Panc1 (cell line): ENCODE measurements at regions of chr9 and their contacts with region 1.

Region 1: GRCh38 chr9:114653556-114654159 is 3.9 kb downstream of the TEX53 start:
- DNase-seq: peak; percentile 54
- ATAC-seq: peak; percentile 76
- H3K4me3 ChIP-seq: no peak overlapping the region
- H3K27ac ChIP-seq: no peak overlapping the region
- H3K4me1 ChIP-seq: no peaks in the 10 kb centered on the region
- H3K27me3 ChIP-seq: no peaks in the 10 kb centered on the region
- CTCF ChIP-seq: peak; percentile 88

Region 2: DNA sequence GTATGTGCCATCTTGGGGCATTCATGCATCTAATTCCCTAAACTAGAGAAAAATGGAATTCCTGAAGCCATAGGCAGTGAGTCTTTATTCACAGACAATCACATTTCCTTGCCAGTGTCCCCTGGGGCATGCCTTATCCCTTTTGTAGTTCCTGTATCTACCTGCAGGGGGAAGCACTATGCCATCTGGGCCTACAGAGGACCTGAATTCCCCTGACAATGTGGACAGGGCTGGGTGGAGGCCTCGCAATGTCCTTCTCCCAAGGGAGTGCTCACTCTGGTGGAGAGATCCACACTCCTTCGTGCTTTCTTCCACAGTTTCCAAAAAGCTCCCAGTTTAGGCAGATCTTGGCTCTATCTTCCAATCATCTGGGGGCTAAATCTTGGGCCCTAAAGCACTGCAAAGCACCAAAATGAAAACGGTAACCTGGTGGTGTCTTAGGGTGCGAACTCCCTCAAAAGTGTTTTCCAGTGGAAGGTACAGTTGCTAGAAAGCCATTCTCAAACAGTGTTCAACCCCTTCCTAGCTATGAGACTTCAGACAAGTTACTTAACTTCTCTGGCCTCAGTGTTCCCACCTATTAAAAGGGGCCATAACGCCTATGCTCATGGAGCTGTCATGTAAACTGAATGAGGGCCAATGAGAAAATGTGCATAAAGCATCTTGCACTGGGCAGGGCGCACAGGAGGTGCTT is 165.9 kb before region 1 on chr9:
- CTCF ChIA-PET with region 1: no interaction called
- POLR2A ChIA-PET with region 1: no interaction called
- in situ Hi-C with region 1: no loop called
- intact Hi-C with region 1: loop called (anchors 2 kb)
- DNase-seq: peak; percentile 54
- ATAC-seq: peak; percentile 98
- H3K4me3 ChIP-seq: no peak overlapping the region
- H3K27ac ChIP-seq: no peak overlapping the region
- H3K4me1 ChIP-seq: no peaks in the 10 kb centered on the region
- H3K27me3 ChIP-seq: no peaks in the 10 kb centered on the region
- CTCF ChIP-seq: peak; percentile 85